Activated CD4-positive, alpha-beta memory T cell treated with anti-CD3 and anti-CD28 coated beads, Interleukin-2, amount 10 ng/mL, durations not matched to agents 7 days and 5 days (primary cell): ENCODE measurements at regions of chr16 and their contacts with region 1.

Region 1: DNA sequence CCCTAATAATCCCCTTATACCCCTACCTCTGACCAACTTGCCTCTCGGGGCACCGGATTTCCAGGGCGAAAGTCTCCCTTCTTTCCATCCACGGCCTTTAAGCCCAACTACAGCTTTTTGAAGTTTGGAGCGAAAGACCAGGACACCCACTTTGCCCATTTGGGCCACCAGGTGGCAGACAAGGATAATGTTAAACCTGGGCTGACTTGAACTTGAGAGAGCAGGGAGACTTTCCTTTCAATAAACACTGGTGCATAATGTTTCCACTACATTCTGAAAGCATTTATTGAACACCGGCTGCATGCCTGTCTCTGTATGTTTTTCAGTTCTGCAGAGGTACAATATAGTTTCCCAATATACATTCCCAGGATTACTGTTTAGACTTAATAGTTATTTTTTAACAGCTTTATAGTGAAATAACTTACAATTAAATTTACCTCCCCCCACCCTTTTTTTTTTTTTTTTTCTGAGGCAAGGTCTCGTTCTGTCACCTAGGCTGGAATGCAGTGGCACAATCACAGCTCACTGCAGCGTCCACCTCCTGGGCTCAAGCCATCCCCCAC is 6.9 kb upstream of the CES3 start:
- DNase-seq: peak; percentile 86
- H3K4me3 Mint-ChIP-seq: no peak overlapping the region
- H3K27ac Mint-ChIP-seq: no peak overlapping the region
- H3K4me1 Mint-ChIP-seq: peaks cover 43% of the 10 kb centered on the region
- H3K27me3 Mint-ChIP-seq: peaks cover 17% of the 10 kb centered on the region

Region 2: DNA sequence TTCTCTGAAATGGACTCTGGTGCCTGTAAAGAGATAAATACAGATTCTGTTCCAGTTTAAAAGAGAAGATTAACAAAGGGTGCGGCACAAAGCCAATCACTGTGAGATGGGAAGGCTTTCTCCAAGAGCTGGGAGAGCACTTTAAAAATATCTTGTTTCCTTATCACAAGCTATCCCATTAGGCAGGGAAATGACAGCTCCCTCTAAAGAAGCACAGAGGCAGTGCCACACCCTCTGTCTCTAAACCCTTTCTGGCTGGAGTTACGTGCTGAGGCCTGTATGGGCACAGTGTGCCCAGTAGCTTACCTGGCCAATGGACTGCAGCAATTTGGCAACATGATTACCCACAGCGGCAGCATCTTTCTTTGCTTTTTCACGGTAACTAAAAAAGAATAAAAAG is 143.8 kb before region 1 on chr16:
- CTCF ChIA-PET with region 1: no interaction called
- POLR2A ChIA-PET with region 1: no interaction called
- DNase-seq: no peak
- H3K4me3 Mint-ChIP-seq: no peak overlapping the region
- H3K27ac Mint-ChIP-seq: no peak overlapping the region
- H3K4me1 Mint-ChIP-seq: no peaks in the 10 kb centered on the region
- H3K27me3 Mint-ChIP-seq: no peaks in the 10 kb centered on the region

Region 3: DNA sequence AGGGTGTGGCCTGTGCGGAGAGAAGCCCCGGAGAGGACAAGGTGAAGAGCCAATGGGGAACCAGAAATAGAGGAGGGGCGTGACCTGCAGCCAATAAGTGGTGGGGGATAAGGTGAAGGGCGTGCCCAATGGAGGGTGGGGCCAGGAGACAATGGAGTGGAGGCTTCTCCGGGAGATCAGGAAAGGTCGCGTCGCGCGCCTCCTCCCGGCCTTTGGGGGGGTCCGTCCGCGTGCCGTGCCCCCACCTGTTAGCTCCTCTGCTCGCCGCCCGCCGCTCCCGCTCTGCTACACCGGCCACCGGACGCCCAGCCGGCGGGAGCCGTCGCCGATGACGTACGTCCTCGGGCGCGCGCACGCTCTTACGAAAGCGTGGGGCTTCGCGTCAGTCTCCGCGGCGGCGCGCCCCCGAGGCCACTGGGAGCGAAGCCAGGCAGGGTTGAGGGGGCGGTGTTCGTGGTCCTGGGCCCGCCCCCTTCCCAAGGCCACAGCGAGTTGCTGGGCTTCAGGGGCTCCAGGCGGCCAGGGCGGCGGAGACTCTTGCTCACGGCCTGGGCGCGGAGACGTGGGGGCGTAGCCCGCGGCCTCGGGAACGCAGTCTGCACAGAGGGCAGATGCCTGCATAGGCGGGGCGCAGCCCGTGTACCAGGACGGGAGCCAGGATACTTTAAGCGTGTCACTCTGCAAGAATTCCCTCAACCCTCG is 229.6 kb after region 1 on chr16 and contains the start of gene MATCAP1:
- CTCF ChIA-PET with region 1: interaction called, 13 read pairs
- POLR2A ChIA-PET with region 1: no interaction called
- DNase-seq: peak; percentile 96
- H3K4me3 Mint-ChIP-seq: peak within 1 kb of the TSS; percentile 78
- H3K27ac Mint-ChIP-seq: no peak within 1 kb of the TSS
- H3K4me1 Mint-ChIP-seq: peaks cover 24% of the 10 kb centered on the region
- H3K27me3 Mint-ChIP-seq: peaks cover 10% of the 10 kb centered on the region
- total RNA-seq, gene MATCAP1: 63.9 to 70.9 TPM